A549 (cell line): ENCODE measurements at regions of chr17 and their contacts with region 1.

Region 1: DNA sequence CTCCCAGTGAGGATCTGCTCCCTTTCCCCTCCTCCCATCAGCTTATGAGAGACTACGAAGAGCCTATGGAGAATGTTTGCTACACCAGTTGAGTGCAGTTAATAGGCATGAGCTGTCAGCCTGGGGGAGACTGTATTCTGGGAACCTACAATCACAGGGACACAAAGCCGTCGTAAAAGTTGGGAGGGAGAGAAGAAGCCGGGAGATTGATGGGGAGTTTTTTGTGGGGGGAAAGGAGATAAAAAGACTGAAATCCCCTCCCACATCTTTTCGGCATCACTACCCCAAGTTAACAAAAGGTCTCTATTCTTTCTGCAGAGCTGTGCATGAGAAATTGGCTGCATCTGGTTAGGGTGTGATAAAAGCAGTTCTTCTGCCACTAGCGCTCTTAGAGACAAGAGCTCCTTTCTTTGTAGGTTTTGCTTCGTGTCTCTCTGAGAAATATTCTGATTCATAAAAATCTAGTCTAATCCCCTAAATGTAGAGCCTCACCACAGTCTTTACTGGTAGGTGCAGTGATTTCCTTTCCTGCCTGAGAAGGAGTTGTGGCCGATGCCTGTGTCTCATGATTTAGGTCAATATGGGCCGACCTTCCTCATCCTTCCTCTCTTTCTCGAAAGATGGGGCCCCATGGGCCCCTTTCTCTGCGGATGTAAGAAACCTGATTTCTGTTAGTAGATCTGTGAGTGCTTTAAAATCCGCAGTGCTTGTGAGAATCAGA is 77.4 kb downstream of the BPTF start:
- DNase-seq: no peak
- ATAC-seq: 0 out of 6 replicates have a peak, but pooled peaks of 1 of the 2 experiments have one; percentile 20
- H3K4me3 ChIP-seq: no peak overlapping the region
- H3K27ac ChIP-seq: no peak overlapping the region
- H3K4me1 ChIP-seq: no peaks in the 10 kb centered on the region
- CTCF ChIP-seq: no peak
- EP300 ChIP-seq: no peak
- POLR2A ChIP-seq: no peak
- RAD21 ChIP-seq: no peak

Region 2: GRCh38 chr17:67891581-67892054 is 11.1 kb before region 1 on chr17:
- CTCF ChIA-PET with region 1: interaction called, 19 read pairs
- POLR2A ChIA-PET with region 1: no interaction called
- DNase-seq: peak; percentile 36 to 68
- ATAC-seq: peak; percentile 82 to 83
- H3K4me3 ChIP-seq: no peak overlapping the region
- H3K27ac ChIP-seq: no peak overlapping the region
- H3K4me1 ChIP-seq: peaks cover 12% of the 10 kb centered on the region; the same call in 2 of the 3 replicates
- CTCF ChIP-seq: peak; percentile 76
- EP300 ChIP-seq: no peak
- POLR2A ChIP-seq: no peak
- RAD21 ChIP-seq: peak; percentile 50 to 61; a peak in 4 of 5 replicates